A549 (cell line): ENCODE measurements at regions of chr9 and their contacts with region 1.

Region 1: DNA sequence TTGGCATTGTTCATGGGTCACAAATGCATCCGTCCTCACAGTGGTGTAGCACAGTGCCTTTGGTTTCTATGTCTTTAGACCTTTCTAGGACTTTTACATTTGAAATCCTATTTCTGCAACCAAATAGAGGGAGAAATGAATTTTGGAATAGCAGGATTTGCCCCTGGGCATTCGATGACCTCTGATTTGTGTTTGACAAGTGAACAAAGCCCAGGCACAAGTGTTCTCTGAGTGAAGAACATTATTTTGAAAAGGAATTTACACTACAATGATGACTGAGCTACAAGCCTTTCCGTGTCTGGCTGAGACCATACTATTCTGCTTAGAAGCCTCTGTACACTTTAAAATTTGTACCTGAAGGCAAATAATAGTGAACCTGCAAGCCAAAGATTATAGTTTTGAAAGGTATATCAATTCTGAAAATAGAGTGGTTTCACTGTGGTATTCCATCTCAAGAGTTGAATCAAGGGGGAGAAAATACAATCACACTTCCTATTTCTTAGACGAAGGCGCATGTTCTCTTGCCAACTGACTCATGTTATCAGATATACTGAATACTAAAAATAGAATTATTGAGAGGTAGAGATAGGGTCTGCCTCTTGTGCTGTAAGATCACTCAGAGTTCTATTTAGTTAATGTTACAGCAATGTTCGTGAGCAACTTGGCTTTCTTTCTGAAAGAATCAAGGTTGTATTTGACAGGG is 297.6 kb downstream of the KDM4C start:
- DNase-seq: no peak
- ATAC-seq: no peak
- H3K4me3 ChIP-seq: no peak overlapping the region
- H3K27ac ChIP-seq: no peak overlapping the region
- H3K4me1 ChIP-seq: no peaks in the 10 kb centered on the region
- CTCF ChIP-seq: no peak
- EP300 ChIP-seq: no peak
- POLR2A ChIP-seq: no peak
- RAD21 ChIP-seq: no peak

Region 2: GRCh38 chr9:7067169-7067568 is 11.8 kb after region 1 on chr9:
- CTCF ChIA-PET with region 1: interaction called, 20 read pairs
- POLR2A ChIA-PET with region 1: no interaction called
- DNase-seq: no peak
- ATAC-seq: no peak
- H3K4me3 ChIP-seq: no peak overlapping the region
- H3K27ac ChIP-seq: no peak overlapping the region
- H3K4me1 ChIP-seq: no peaks in the 10 kb centered on the region
- CTCF ChIP-seq: no peak
- EP300 ChIP-seq: no peak
- POLR2A ChIP-seq: no peak
- RAD21 ChIP-seq: no peak

Region 3: DNA sequence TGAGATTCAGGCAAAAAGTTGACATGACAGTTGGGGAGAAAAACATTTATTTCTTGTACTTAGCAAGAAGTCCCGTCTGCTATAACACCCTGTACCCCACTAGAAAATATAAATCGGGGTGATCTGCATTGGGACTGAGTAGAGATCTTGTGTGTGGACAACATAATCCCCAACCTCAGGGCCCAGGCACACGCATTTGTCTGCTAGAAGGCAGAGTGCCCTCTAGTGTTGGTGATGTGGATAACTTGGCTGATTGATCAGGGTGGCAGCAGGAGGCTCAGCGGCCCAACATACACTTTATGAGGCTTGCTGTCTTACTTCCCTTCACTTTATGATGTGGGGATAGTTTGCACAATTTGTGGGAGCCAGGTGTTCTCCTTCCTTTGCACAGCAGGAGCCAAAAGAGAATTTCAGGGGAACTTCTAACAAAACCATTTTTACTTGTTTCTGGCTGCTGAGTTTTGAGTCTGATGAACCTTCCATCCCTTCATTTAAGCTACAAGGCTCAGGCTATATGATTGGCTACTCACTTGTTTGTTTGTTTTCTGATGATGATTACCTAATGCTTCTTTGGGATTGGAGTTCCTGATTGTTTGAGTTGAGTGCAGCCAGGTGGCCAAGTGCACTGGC is 481.1 kb after region 1 on chr9:
- CTCF ChIA-PET with region 1: interaction called, 12 read pairs
- POLR2A ChIA-PET with region 1: no interaction called
- DNase-seq: peak; percentile 21 to 54
- ATAC-seq: peak; percentile 76 to 92; a peak in 5 of 6 replicates
- H3K4me3 ChIP-seq: no peak overlapping the region
- H3K27ac ChIP-seq: no peak overlapping the region
- H3K4me1 ChIP-seq: no peaks in the 10 kb centered on the region
- CTCF ChIP-seq: peak; percentile 62
- EP300 ChIP-seq: no peak
- POLR2A ChIP-seq: no peak
- RAD21 ChIP-seq: peak; percentile 56 to 66